ENCODE measurements at regions of chr16 and their contacts with region 1.

Region 1: GRCh38 chr16:2340564-2341455 is at the start of gene ABCA3:
- DNase-seq: peak; percentile 87 to 100 (median 97)
- ATAC-seq: peak; percentile 87 to 96 (median 92)
- H3K4me3 ChIP-seq: peak within 1 kb of the TSS; percentile 65 to 86 (median 78)
- H3K27ac ChIP-seq: peak within 1 kb of the TSS in 1 of 4 donors; percentile 24
- H3K4me1 ChIP-seq: peaks cover 0 to 5% (median 4%) of the 10 kb centered on the region in 3 donors
- H3K27me3 ChIP-seq: no peaks in the 10 kb centered on the region
- CTCF ChIP-seq: peak; percentile 100
- total RNA-seq, gene ABCA3: 12.7 to 26.5 (median 16.5) TPM

Region 2: GRCh38 chr16:2223375-2224182 is 117.2 kb before region 1 on chr16 and contains the start of gene E4F1:
- intact Hi-C with region 1: no loop called
- DNase-seq: peak; percentile 99 to 100 (median 100)
- ATAC-seq: peak; percentile 97 to 99 (median 98)
- H3K4me3 ChIP-seq: peak within 1 kb of the TSS; percentile 88 to 98 (median 94)
- H3K27ac ChIP-seq: peak within 1 kb of the TSS; percentile 57 to 78 (median 70)
- H3K4me1 ChIP-seq: peaks cover 6 to 11% (median 10%) of the 10 kb centered on the region in 3 donors
- H3K27me3 ChIP-seq: no peaks in the 10 kb centered on the region
- CTCF ChIP-seq: no peak
- total RNA-seq, gene E4F1: 8.7 to 13.2 (median 9.4) TPM

Region 3: DNA sequence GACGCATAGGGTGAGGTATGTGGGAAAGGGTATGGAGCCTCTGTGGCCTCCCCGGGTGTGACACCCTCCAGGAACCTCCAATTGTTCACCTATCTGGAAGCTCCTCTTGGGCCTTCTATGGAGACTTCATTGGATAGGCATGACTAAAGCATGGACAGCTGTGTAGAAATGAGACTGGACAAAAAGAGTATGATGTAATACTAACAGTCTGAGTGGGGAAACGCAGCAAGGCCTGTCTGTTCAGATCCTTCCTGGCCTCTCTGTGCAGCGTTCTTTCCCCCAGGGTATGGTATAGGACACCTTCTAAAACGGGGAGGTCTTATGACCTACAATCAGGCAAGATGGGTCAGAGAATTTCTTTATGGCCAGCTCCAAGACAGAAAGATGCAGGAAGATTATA is 57.7 kb after region 1 on chr16:
- intact Hi-C with region 1: loop called in 1 of 3 experiments (anchors 10 kb)
- DNase-seq: no peak
- ATAC-seq: no peak
- H3K4me3 ChIP-seq: no peak overlapping the region
- H3K27ac ChIP-seq: no peak overlapping the region
- H3K4me1 ChIP-seq: no peaks in the 10 kb centered on the region
- H3K27me3 ChIP-seq: no peaks in the 10 kb centered on the region
- CTCF ChIP-seq: no peak

Region 4: DNA sequence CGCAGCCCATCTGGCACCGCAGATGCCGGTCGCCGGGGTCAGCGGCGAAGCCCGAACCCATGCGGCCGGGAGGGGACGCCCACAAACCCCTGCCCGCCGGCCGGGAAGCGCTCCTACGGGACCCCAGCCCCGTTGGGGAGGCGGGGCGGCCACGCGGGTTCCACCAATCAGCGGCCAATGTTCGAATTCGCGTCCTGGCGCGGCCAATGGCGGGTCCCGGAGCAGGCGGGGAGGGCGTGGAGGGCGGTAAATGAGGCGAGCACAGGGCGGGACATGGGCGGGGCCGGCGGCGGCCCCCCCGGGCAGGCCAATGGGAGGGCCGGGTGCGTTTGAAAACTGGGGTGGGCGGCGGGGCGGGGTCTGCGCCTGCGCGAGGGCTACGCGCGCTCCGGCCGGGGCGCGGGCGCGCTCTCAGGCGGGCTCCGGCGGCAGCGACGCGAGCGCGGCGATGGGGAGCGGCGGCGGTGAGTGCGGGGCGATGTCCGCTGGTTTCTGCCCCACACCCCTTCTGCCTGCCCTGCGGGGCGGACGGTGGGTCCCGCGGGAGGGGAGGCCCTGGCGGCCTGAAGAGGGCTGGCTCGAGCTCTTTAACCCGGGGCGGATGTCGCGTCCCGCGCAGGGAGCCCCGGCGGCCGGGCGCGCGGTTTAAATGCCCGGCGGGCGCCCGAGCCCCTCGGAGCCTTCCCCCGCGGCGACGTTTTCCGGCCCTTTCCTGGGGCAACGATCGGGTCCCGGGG is 88.4 kb after region 1 on chr16 and contains the start of gene CCNF:
- intact Hi-C with region 1: loop called in 2 of 3 experiments (anchors 10 kb)
- DNase-seq: peak; percentile 97 to 99 (median 98)
- ATAC-seq: peak; percentile 95 to 98 (median 96)
- H3K4me3 ChIP-seq: peak within 1 kb of the TSS; percentile 83 to 94 (median 90)
- H3K27ac ChIP-seq: peak within 1 kb of the TSS in 3 of 4 donors; percentile 46 to 76 (median 73)
- H3K4me1 ChIP-seq: peaks cover 0 to 6% (median 6%) of the 10 kb centered on the region in 3 donors
- H3K27me3 ChIP-seq: no peaks in the 10 kb centered on the region
- CTCF ChIP-seq: no peak
- total RNA-seq, gene CCNF: 0.69 to 2.6 (median 1.3) TPM